Tibial artery (tissue), 4 donors: ENCODE measurements at regions of chr11 and their contacts with region 1.

Region 1: DNA sequence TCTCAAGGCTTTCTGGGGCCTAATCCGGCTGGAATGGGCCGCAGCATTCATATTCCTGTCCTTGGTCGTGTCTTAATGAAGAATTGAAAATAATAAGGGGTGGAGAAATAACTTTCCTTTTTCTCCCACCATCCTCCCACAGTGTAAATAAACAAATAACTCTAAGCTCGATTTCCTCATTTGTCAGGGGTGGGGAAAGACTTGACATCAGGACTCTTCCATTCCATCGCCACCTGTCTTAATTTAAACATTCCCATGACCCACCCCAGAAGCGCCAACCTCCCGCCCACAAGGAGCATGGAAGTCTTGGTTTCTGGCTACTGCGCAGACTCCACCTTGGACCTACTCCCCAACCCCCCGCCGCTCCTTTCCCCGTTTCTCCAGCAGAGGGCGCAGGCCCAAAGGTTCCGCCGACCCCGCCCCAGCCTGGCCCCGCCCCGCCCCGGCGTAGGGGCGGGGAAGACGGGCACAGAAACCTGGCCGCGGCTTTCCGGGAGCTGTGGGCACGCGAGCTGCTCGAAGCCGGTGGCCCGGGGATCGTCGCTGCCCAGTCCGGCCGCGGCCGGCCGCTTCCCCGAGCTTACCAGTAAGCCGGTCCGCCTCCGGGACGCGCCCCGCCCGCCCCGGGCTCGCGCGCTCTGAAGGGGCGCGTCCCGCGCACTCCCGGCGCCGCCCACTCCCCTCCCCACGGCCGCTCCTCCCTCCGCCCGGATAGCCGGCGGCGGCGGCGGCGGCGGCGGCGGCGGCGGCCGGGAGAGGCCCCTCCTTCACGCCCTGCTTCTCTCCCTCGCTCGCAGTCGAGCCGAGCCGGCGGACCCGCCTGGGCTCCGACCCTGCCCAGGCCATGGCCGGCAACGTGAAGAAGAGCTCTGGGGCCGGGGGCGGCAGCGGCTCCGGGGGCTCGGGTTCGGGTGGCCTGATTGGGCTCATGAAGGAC is at the start of gene CBL:
- DNase-seq: peak; percentile 94 to 96
- H3K4me3 ChIP-seq: peak within 1 kb of the TSS; percentile 98 to 99
- H3K27ac ChIP-seq: peak within 1 kb of the TSS; percentile 96 to 98
- H3K4me1 ChIP-seq: peaks cover 0 to 31% (median 11%) of the 10 kb centered on the region in 4 donors
- H3K27me3 ChIP-seq: no peaks in the 10 kb centered on the region
- CTCF ChIP-seq: peak; percentile 79 to 96

Region 2: DNA sequence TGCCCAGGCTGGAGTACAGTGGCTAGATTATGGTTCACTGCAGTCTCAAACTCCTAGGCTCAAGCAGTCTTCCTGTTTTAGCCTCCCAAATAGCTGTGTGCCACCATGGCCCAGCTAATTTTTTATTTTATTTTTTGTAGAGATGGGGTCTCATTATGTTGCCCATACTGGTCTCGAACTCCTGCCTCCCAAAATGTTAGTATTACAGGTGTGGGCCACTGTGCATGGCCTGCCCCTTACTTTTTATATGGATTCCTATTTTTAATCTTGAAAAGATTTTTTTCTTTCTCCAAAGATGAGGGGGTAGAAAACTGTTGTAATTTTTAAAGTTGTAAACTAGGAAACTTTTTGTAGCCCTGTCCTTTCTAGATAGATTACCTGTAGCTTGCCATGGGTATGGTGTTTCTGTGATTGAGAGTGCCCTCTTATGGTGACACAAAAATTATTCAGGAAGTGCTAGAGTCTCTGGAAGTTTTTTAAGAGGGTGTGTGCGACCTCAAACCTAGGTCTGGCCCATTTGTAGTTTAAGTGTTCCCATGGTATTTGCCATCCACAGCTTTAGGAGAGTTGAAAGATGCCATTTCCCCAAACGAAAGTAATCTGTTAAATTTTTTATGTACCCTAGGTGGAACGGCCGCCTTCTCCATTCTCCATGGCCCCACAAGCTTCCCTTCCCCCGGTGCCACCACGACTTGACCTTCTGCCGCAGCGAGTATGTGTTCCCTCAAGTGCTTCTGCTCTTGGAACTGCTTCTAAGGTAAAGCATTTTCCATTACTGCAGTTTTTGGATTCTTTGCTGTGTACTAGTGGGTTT is 78.7 kb after region 1 on chr11:
- intact Hi-C with region 1: loop called (anchors 10 kb)
- DNase-seq: no peak
- H3K4me3 ChIP-seq: no peak overlapping the region
- H3K27ac ChIP-seq: no peak overlapping the region
- H3K4me1 ChIP-seq: peaks cover 0 to 7% (median under 1%) of the 10 kb centered on the region in 4 donors
- H3K27me3 ChIP-seq: no peaks in the 10 kb centered on the region
- CTCF ChIP-seq: peak; percentile 42 to 43

Region 3: DNA sequence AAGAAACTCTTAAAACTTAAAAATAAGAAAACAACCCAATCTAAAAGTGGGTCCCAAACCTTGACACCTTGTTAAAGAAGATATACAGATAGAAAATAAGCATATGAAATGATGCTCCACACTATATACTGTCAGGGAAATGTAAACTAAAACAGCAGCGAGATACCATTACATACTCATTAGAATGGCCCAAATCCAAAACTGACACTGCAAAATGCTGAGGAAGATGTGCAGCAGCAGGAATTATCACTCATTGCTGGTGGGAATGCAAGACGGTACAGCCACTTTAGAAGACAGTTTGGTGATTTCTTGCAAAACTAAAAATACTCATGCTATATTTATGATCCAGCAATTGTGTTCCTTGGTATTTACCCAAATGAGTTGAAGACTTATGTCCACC is 123.5 kb after region 1 on chr11:
- intact Hi-C with region 1: loop called (anchors 5 kb)
- DNase-seq: no peak
- H3K4me3 ChIP-seq: no peak overlapping the region
- H3K27ac ChIP-seq: no peak overlapping the region
- H3K4me1 ChIP-seq: peaks cover 0 to 5% (median 2%) of the 10 kb centered on the region in 4 donors
- H3K27me3 ChIP-seq: no peaks in the 10 kb centered on the region
- CTCF ChIP-seq: no peak